ENCODE measurements at regions of chr11 and their contacts with region 1.

Region 1: GRCh38 chr11:95715777-95716241 is 73.8 kb downstream of the FAM76B start:
- DNase-seq: peak; percentile 99
- H3K4me3 ChIP-seq: no peak overlapping the region
- H3K27ac ChIP-seq: peak overlapping the region; percentile 79
- H3K4me1 ChIP-seq: peaks cover 13% of the 10 kb centered on the region
- H3K27me3 ChIP-seq: no peaks in the 10 kb centered on the region
- CTCF ChIP-seq: no peak

Region 2: GRCh38 chr11:95751515-95751914 is 35.7 kb after region 1 on chr11:
- CTCF ChIA-PET with region 1: no interaction called
- dilution Hi-C with region 1: loop called (anchors 5 kb)
- in situ Hi-C with region 1: no loop called
- intact Hi-C with region 1: no loop called
- DNase-seq: no peak
- H3K4me3 ChIP-seq: no peak overlapping the region
- H3K27ac ChIP-seq: no peak overlapping the region
- H3K4me1 ChIP-seq: no peaks in the 10 kb centered on the region
- H3K27me3 ChIP-seq: no peaks in the 10 kb centered on the region
- CTCF ChIP-seq: no peak

Region 3: DNA sequence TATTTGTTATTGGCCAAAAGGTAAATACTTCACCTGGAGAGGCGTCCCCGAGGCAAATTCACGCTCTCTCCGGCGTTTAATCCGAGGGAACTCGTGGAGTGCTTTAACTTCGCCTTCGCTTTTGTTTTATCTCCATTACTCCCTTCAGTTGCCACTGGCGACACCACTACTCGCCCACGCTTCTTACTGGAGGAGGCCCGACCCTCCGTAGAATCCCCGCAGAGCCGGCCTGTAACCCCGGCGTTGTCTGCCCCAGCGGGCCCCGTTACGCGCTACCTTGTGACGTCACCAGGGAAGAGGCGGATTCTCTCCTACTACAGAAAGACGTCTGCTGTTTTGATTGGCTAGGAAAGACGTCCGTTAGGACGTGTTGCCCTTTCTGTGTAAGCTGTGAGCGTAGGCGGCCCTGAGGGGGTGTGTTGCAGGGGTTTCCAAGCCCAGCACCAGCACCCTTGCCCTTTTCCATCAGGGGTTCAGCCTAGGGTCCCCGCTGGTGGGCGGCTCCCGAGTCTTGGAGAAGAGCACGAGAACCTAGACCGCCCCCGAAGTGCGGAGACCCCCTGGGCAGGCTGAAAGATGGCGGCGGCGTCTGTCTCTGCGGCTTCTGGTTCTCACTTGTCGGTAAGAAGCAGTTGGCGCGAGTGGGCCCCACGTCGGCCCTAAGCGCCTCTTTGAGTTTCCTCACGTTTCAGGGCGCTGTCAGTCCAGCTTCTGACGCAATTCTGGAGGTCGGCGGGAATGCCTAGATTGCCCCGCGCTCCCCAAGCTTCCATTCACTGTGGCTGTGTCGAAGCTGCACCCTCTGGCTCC is 74.5 kb after region 1 on chr11 and contains the start of gene CEP57:
- CTCF ChIA-PET with region 1: no interaction called
- dilution Hi-C with region 1: loop called (anchors 10 kb)
- in situ Hi-C with region 1: no loop called
- intact Hi-C with region 1: no loop called
- DNase-seq: peak; percentile 97
- H3K4me3 ChIP-seq: peak within 1 kb of the TSS; percentile 73 to 98 (median 81)
- H3K27ac ChIP-seq: peak within 1 kb of the TSS; percentile 92
- H3K4me1 ChIP-seq: peaks cover 19% of the 10 kb centered on the region
- H3K27me3 ChIP-seq: no peaks in the 10 kb centered on the region
- CTCF ChIP-seq: no peak
- total RNA-seq, gene CEP57: 25.2 to 46.8 TPM